ENCODE measurements at regions of chr15 and their contacts with region 1.

Region 1: GRCh38 chr15:63466378-63467192 is 37.8 kb upstream of the USP3 start:
- DNase-seq: peak; percentile 38 to 39
- H3K4me3 ChIP-seq: no peak overlapping the region
- H3K27ac ChIP-seq: no peak overlapping the region
- H3K4me1 ChIP-seq: peaks cover 12% of the 10 kb centered on the region
- H3K27me3 ChIP-seq: no peaks in the 10 kb centered on the region
- CTCF ChIP-seq: peak; percentile 65

Region 2: GRCh38 chr15:63288778-63289378 is 177.7 kb before region 1 on chr15:
- CTCF ChIA-PET with region 1: no interaction called
- POLR2A ChIA-PET with region 1: interaction called, 9 read pairs
- intact Hi-C with region 1: loop called (anchors 10 kb)
- DNase-seq: no peak
- H3K4me3 ChIP-seq: no peak overlapping the region
- H3K27ac ChIP-seq: no peak overlapping the region
- H3K4me1 ChIP-seq: no peaks in the 10 kb centered on the region
- H3K27me3 ChIP-seq: no peaks in the 10 kb centered on the region
- CTCF ChIP-seq: peak; percentile 75

Region 3: GRCh38 chr15:63436872-63437375 is 29.7 kb before region 1 on chr15:
- CTCF ChIA-PET with region 1: interaction called, 10 read pairs
- POLR2A ChIA-PET with region 1: no interaction called
- intact Hi-C with region 1: no loop called
- DNase-seq: peak in 1 of 2 experiments; percentile 52
- H3K4me3 ChIP-seq: no peak overlapping the region
- H3K27ac ChIP-seq: no peak overlapping the region
- H3K4me1 ChIP-seq: no peaks in the 10 kb centered on the region
- H3K27me3 ChIP-seq: no peaks in the 10 kb centered on the region
- CTCF ChIP-seq: no peak

Region 4: DNA sequence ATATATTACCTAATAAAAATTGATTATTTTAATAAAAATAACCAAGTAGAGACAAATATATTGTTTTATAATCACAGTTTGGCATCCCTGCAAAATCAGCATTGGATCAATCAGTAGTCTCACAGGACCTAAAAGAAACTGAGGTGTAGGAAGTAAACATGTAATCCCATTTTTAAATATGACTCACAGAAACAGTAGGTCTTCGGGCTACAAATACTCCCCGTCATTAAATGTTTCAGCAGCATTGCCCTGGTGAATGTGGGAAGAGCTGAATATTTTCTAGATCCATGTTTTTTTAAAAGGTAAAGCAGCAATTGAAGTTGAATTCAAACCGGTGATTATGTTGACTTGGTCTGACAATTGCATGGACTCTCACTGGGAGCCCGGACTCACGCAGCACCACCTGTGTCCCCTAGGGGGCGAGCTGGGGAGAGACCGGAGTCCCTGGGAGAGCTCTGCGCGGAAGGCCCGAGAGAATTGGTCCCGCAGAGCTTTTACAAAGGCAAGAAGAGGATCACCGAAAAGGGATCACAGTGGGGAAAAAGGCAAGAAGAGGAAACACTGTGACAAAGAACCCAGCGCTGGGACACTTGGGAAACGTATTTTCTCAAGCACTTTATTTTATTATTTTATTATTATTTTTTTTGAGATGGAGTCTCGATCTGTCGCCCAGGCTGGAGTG is 20.6 kb after region 1 on chr15:
- CTCF ChIA-PET with region 1: no interaction called
- POLR2A ChIA-PET with region 1: no interaction called
- intact Hi-C with region 1: no loop called
- DNase-seq: peak; percentile 43 to 74
- H3K4me3 ChIP-seq: no peak overlapping the region
- H3K27ac ChIP-seq: no peak overlapping the region
- H3K4me1 ChIP-seq: peaks cover 22% of the 10 kb centered on the region
- H3K27me3 ChIP-seq: no peaks in the 10 kb centered on the region
- CTCF ChIP-seq: peak; percentile 79

Region 5: GRCh38 chr15:63504247-63504978 is 37.8 kb after region 1 on chr15 and contains the start of gene USP3:
- CTCF ChIA-PET with region 1: interaction called, 4 read pairs
- POLR2A ChIA-PET with region 1: interaction called, 5 read pairs
- intact Hi-C with region 1: loop called (anchors 5 kb)
- DNase-seq: peak; percentile 75 to 95
- H3K4me3 ChIP-seq: peak within 1 kb of the TSS; percentile 91
- H3K27ac ChIP-seq: peak within 1 kb of the TSS; percentile 97
- H3K4me1 ChIP-seq: peaks cover 66% of the 10 kb centered on the region
- H3K27me3 ChIP-seq: no peaks in the 10 kb centered on the region
- CTCF ChIP-seq: no peak; the same call in 1 of the 2 replicates
- total RNA-seq, gene USP3: 57.5 and 59.7 TPM in 2 replicates

Region 6: DNA sequence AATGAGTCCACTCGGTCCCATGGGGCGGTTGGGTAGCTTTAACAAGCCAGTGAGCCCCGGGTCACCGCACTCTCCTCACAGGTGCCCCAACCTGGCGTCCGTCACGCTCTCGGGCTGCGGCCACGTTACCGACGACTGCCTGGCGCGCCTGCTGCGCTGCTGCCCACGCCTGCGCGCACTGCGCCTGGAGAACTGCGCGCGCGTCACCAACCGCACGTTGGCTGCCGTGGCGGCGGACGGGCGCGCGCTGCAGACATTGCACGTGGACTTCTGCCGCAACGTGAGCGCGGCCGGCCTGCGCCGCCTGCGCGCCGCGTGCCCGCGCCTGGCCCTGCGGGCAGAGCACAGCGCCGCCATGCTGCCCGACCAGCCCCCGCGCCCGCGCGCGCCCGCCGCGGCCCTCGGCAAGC is 134.0 kb after region 1 on chr15:
- CTCF ChIA-PET with region 1: interaction called, 12 read pairs
- POLR2A ChIA-PET with region 1: no interaction called
- intact Hi-C with region 1: loop called (anchors 2 kb)
- DNase-seq: peak; percentile 63 to 91
- H3K4me3 ChIP-seq: peak overlapping the region; percentile 82
- H3K27ac ChIP-seq: peak overlapping the region; percentile 56; the same call in 1 of the 2 replicates
- H3K4me1 ChIP-seq: peaks cover 6% of the 10 kb centered on the region; the same call in 1 of the 2 replicates
- H3K27me3 ChIP-seq: no peaks in the 10 kb centered on the region
- CTCF ChIP-seq: no peak

Region 7: GRCh38 chr15:63805993-63806980 is 339.7 kb after region 1 on chr15:
- CTCF ChIA-PET with region 1: no interaction called
- POLR2A ChIA-PET with region 1: no interaction called
- intact Hi-C with region 1: no loop called
- DNase-seq: no peak
- H3K4me3 ChIP-seq: no peak overlapping the region
- H3K27ac ChIP-seq: no peak overlapping the region
- H3K4me1 ChIP-seq: no peaks in the 10 kb centered on the region
- H3K27me3 ChIP-seq: no peaks in the 10 kb centered on the region
- CTCF ChIP-seq: no peak

Region 8: DNA sequence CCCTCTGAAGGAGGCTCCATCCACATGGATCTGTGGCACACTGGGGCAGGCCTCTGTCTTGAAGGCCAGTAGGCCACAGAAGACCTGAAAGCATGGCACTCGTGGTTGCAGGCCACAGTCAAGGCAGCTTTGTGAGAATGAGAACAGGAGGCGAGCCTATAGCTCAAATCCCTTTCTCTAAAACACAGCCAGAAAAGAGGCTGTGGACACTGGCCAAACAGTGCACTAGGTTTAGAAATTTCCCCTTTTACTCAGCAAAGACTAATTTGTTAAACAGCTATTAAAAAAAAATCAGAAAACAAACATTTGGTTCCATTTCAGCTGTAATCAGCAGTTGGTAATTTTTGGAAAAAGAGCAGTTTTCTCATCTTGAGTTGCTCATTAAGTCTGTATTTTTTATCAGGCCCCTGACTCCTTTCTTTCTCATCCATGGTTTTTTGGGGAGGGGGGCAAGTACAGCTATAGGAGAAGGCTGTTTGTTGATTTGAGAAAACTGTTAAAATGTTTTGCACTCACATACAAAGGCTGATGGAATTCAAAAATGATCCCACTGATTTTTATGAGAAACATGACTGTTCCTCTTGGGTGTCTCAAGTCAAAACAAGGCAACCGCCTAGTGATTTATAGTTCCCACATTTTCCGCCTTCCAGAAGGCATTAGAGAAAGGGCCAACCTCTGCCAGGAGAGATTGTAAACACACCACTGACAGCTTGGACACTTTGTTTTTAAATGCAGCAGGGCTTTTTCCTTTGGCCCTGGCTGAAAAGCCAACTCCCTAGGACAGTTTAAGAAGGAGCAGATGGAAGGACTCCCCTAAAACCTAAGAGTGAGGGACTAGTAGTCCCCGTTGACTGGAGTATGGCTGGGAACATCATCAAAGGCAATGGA is 1792.0 kb after region 1 on chr15:
- CTCF ChIA-PET with region 1: no interaction called
- POLR2A ChIA-PET with region 1: no interaction called
- intact Hi-C with region 1: no loop called
- DNase-seq: no peak
- H3K4me3 ChIP-seq: no peak overlapping the region
- H3K27ac ChIP-seq: no peak overlapping the region
- H3K4me1 ChIP-seq: no peaks in the 10 kb centered on the region
- H3K27me3 ChIP-seq: no peaks in the 10 kb centered on the region
- CTCF ChIP-seq: no peak

Measured in PC-9 (cell line).